GM12878 (cell line): ENCODE measurements at regions of chr5 and their contacts with region 1.

Region 1: GRCh38 chr5:132466433-132467286 is 23.9 kb downstream of the IRF1 start:
- DNase-seq: peak; percentile 94
- ATAC-seq: peak; percentile 83
- H3K4me3 ChIP-seq: peak overlapping the region; percentile 42; the same call in 1 of the 2 replicates
- H3K27ac ChIP-seq: peak overlapping the region; percentile 96
- H3K4me1 ChIP-seq: peaks cover 60% of the 10 kb centered on the region
- H3K27me3 ChIP-seq: no peaks in the 10 kb centered on the region
- CTCF ChIP-seq: no peak
- EP300 ChIP-seq: peak; percentile 48 to 78; a peak in 3 of 4 replicates
- POLR2A ChIP-seq: no peak
- RAD21 ChIP-seq: peak; percentile 33

Region 2: GRCh38 chr5:132203464-132203818 is 263.2 kb before region 1 on chr5:
- CTCF ChIA-PET with region 1: no interaction called
- POLR2A ChIA-PET with region 1: no interaction called
- RAD21 ChIA-PET with region 1: no interaction called
- SMC1A ChIA-PET with region 1: no interaction called
- in situ Hi-C with region 1: no loop called
- intact Hi-C with region 1: no loop called
- DNase-seq: no peak
- ATAC-seq: peak; percentile 55
- H3K4me3 ChIP-seq: no peak overlapping the region
- H3K27ac ChIP-seq: no peak overlapping the region
- H3K4me1 ChIP-seq: peaks cover 6% of the 10 kb centered on the region
- H3K27me3 ChIP-seq: no peaks in the 10 kb centered on the region
- CTCF ChIP-seq: no peak
- EP300 ChIP-seq: no peak
- POLR2A ChIP-seq: no peak
- RAD21 ChIP-seq: no peak

Region 3: DNA sequence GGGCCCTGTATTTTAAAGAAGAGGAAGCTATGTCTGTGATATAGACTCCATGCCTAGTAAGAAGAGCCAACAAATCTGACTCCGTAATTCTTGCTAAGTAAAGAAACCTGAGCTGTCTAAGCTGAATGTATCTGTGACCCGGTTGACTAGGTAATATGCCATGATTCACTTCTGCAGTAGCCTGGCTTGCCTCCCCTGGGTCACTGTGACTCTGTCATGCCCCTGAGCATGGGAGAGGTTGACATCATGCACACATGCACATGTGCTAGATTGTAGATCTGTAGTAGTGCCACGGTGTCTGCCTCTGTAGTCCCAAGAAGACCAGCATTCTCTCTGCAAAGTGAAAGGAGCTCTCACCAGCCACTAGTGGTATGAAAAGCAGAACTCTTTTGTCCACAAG is 88.1 kb before region 1 on chr5:
- CTCF ChIA-PET with region 1: no interaction called
- POLR2A ChIA-PET with region 1: no interaction called
- RAD21 ChIA-PET with region 1: no interaction called
- SMC1A ChIA-PET with region 1: no interaction called
- in situ Hi-C with region 1: no loop called
- intact Hi-C with region 1: no loop called
- DNase-seq: no peak
- ATAC-seq: peak; percentile 71
- H3K4me3 ChIP-seq: no peak overlapping the region
- H3K27ac ChIP-seq: no peak overlapping the region
- H3K4me1 ChIP-seq: no peaks in the 10 kb centered on the region
- H3K27me3 ChIP-seq: no peaks in the 10 kb centered on the region
- CTCF ChIP-seq: no peak
- EP300 ChIP-seq: no peak
- POLR2A ChIP-seq: no peak
- RAD21 ChIP-seq: no peak

Region 4: GRCh38 chr5:132410451-132411381 is 55.9 kb before region 1 on chr5:
- CTCF ChIA-PET with region 1: interaction called, 17 read pairs
- POLR2A ChIA-PET with region 1: interaction called, 10 read pairs
- RAD21 ChIA-PET with region 1: interaction called, 38 read pairs
- SMC1A ChIA-PET with region 1: interaction called, 35 read pairs
- in situ Hi-C with region 1: no loop called
- intact Hi-C with region 1: no loop called
- DNase-seq: no peak
- ATAC-seq: peak; percentile 68
- H3K4me3 ChIP-seq: peak overlapping the region; percentile 89
- H3K27ac ChIP-seq: peak overlapping the region; percentile 95
- H3K4me1 ChIP-seq: peaks cover 11% of the 10 kb centered on the region
- H3K27me3 ChIP-seq: no peaks in the 10 kb centered on the region
- CTCF ChIP-seq: peak; percentile 54 to 67 (median 61)
- EP300 ChIP-seq: peak in 1 of 2 experiments; percentile 39; a peak in 1 of 4 replicates
- POLR2A ChIP-seq: peak; percentile 90
- RAD21 ChIP-seq: peak; percentile 51; the same call in 1 of the 2 replicates

Region 5: DNA sequence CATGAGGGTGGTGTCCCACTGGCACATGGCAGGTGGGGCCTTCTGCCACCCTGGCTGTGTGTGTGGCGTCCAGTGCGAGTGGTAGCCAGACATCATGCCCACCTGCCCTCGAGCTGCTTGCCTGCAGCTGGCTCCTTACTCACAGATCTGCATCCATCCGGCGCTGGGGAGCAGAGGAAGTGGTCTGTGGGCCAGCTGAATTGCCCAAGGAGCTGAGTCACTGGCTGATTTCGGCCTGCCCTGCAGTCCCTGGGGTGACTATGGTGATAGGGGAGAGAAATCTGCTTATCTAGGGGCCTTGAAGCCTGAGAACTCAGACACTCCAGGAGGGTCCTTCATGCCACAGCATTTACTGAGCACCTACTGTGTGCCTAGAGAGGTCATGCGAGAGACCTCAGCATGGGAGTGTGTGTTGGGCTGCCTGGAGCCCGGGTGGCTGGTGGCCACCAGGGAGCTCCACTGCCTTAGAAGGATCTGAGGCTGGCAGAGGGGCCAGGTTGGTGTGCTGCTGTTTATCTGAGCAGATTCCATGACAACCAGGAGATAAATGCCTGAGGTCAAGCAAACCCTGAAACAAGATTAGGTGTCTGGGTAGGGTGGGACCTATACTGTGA is 40.0 kb before region 1 on chr5:
- CTCF ChIA-PET with region 1: interaction called, 139 read pairs
- POLR2A ChIA-PET with region 1: interaction called, 92 read pairs
- RAD21 ChIA-PET with region 1: interaction called, 146 read pairs
- SMC1A ChIA-PET with region 1: interaction called, 300 read pairs
- in situ Hi-C with region 1: loop called (anchors 5 kb)
- intact Hi-C with region 1: loop called (anchors 1 kb)
- DNase-seq: no peak
- ATAC-seq: peak; percentile 62
- H3K4me3 ChIP-seq: peak overlapping the region; percentile 49
- H3K27ac ChIP-seq: peak overlapping the region; percentile 94
- H3K4me1 ChIP-seq: peaks cover 90% of the 10 kb centered on the region
- H3K27me3 ChIP-seq: no peaks in the 10 kb centered on the region
- CTCF ChIP-seq: peak; percentile 47 to 56 (median 52)
- EP300 ChIP-seq: peak; percentile 17 to 67; a peak in 3 of 4 replicates
- POLR2A ChIP-seq: peak; percentile 88
- RAD21 ChIP-seq: peak; percentile 42; the same call in 1 of the 2 replicates

Region 6: DNA sequence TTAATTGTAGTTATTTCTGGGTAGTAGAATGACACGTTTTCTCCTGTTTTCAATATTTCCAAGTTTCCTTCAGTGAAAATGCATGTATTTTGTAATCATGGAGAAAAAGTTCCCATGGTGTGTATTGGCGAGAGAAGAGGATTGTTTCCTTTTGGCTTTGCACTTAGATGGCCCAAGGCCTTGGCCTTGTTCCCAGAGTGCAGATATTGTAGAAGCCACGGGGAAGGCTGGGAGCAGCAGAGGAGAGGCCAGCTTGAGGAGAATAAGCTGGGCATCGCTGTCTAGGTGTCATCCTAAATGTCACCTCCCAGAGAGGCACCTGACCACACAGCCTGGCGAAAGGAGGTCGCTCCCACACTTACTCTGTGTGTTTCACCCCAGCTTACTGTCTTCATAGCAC is 20.0 kb before region 1 on chr5:
- CTCF ChIA-PET with region 1: interaction called, 4 read pairs
- POLR2A ChIA-PET with region 1: interaction called, 11 read pairs
- RAD21 ChIA-PET with region 1: interaction called, 3 read pairs
- SMC1A ChIA-PET with region 1: interaction called, 6 read pairs
- in situ Hi-C with region 1: no loop called
- intact Hi-C with region 1: no loop called
- DNase-seq: no peak
- ATAC-seq: no peak
- H3K4me3 ChIP-seq: no peak overlapping the region
- H3K27ac ChIP-seq: no peak overlapping the region
- H3K4me1 ChIP-seq: peaks cover 13% of the 10 kb centered on the region
- H3K27me3 ChIP-seq: no peaks in the 10 kb centered on the region
- CTCF ChIP-seq: no peak
- EP300 ChIP-seq: no peak
- POLR2A ChIP-seq: no peak
- RAD21 ChIP-seq: no peak

Region 7: DNA sequence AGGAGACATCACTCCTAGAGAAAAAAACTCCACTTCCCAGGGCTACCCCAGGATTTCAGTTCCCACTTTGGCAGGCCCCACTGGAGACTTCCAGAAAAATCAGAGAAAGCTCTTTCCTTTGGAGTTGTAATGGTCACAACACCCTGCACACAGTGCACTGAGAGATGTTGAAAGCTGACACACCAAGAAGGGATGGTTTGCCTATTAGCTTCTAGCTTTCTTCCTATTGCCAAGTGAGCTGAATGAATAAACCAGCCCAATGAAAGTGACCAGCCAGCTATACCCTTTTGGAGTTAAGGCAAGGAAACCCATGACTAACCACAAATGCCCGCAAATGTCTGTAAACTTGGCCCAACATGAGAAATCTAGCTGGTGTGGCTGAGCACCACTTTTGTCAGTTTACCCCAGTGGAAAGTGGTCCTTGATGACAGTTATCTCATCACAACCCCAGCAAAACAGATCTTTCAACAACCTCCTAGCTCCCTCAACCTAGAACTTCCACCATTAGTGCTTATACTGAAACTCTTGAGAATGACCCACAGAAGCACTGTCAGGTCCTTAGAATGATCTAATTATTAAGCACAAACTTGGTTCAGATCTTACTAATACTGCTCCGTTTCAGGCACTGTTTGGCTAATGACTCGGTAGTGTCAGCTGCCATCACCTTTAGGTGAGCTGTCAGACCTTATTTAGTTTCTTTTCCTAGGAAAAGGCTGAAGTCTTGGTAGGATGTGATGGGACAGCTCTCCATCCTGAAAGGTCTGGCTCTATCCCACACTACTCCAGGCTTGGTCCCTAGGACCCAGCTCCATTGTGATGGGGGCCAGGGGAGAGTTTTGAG is 12.7 kb after region 1 on chr5:
- CTCF ChIA-PET with region 1: interaction called, 27 read pairs
- POLR2A ChIA-PET with region 1: interaction called, 69 read pairs
- RAD21 ChIA-PET with region 1: interaction called, 50 read pairs
- SMC1A ChIA-PET with region 1: interaction called, 55 read pairs
- in situ Hi-C with region 1: no loop called
- intact Hi-C with region 1: no loop called
- DNase-seq: no peak
- ATAC-seq: peak; percentile 53
- H3K4me3 ChIP-seq: no peak overlapping the region
- H3K27ac ChIP-seq: peak overlapping the region; percentile 20
- H3K4me1 ChIP-seq: peaks cover 29% of the 10 kb centered on the region
- H3K27me3 ChIP-seq: no peaks in the 10 kb centered on the region
- CTCF ChIP-seq: no peak
- EP300 ChIP-seq: no peak
- POLR2A ChIP-seq: no peak; the same call in 1 of the 2 replicates
- RAD21 ChIP-seq: no peak

Region 8: GRCh38 chr5:132495667-132496190 is 29.1 kb after region 1 on chr5:
- CTCF ChIA-PET with region 1: interaction called, 51 read pairs
- POLR2A ChIA-PET with region 1: interaction called, 178 read pairs
- RAD21 ChIA-PET with region 1: interaction called, 64 read pairs
- SMC1A ChIA-PET with region 1: interaction called, 47 read pairs
- in situ Hi-C with region 1: no loop called
- intact Hi-C with region 1: loop called (anchors 1 kb)
- DNase-seq: no peak
- ATAC-seq: peak; percentile 69
- H3K4me3 ChIP-seq: peak overlapping the region; percentile 85
- H3K27ac ChIP-seq: peak overlapping the region; percentile 63
- H3K4me1 ChIP-seq: peaks cover 49% of the 10 kb centered on the region
- H3K27me3 ChIP-seq: no peaks in the 10 kb centered on the region
- CTCF ChIP-seq: 0 out of 6 replicates have a peak, but pooled peaks of 1 of the 3 experiments have one; percentile 7
- EP300 ChIP-seq: peak in 1 of 2 experiments; percentile 38; a peak in 2 of 4 replicates
- POLR2A ChIP-seq: peak; percentile 48; the same call in 1 of the 2 replicates
- RAD21 ChIP-seq: no peak

Region 9: GRCh38 chr5:132820162-132820754 is 353.6 kb after region 1 on chr5:
- CTCF ChIA-PET with region 1: no interaction called
- POLR2A ChIA-PET with region 1: no interaction called
- RAD21 ChIA-PET with region 1: no interaction called
- SMC1A ChIA-PET with region 1: no interaction called
- in situ Hi-C with region 1: no loop called
- intact Hi-C with region 1: no loop called
- DNase-seq: peak; percentile 65
- ATAC-seq: peak; percentile 97
- H3K4me3 ChIP-seq: no peak overlapping the region
- H3K27ac ChIP-seq: no peak overlapping the region
- H3K4me1 ChIP-seq: no peaks in the 10 kb centered on the region; the same call in 1 of the 2 replicates
- H3K27me3 ChIP-seq: no peaks in the 10 kb centered on the region; a peak in 2 of 4 replicates
- CTCF ChIP-seq: peak; percentile 89 to 94 (median 89)
- EP300 ChIP-seq: no peak
- POLR2A ChIP-seq: no peak
- RAD21 ChIP-seq: peak; percentile 87